HCT116 (cell line): ENCODE measurements at regions of chr3 and their contacts with region 1.

Region 1: GRCh38 chr3:151290673-151291072 is 12.3 kb upstream of the P2RY14 start:
- DNase-seq: peak; percentile 29
- ATAC-seq: no peak
- H3K4me3 ChIP-seq: no peak overlapping the region
- H3K27ac ChIP-seq: no peak overlapping the region
- H3K4me1 ChIP-seq: no peaks in the 10 kb centered on the region
- H3K27me3 ChIP-seq: no peaks in the 10 kb centered on the region
- CTCF ChIP-seq: peak; percentile 28 to 76 (median 68); a peak in 5 of 6 replicates
- POLR2A ChIP-seq: no peak
- RAD21 ChIP-seq: peak; percentile 90

Region 2: GRCh38 chr3:151305752-151306151 is 15.1 kb after region 1 on chr3:
- CTCF ChIA-PET with region 1: no interaction called
- POLR2A ChIA-PET with region 1: no interaction called
- RAD21 ChIA-PET with region 1: no interaction called
- intact Hi-C with region 1: no loop called
- DNase-seq: no peak
- ATAC-seq: peak; percentile 23; the same call in 1 of the 2 replicates
- H3K4me3 ChIP-seq: peak overlapping the region in 1 of 2 experiments; percentile 39; a peak in 2 of 4 replicates
- H3K27ac ChIP-seq: peak overlapping the region; percentile 75
- H3K4me1 ChIP-seq: peaks cover 26 to 62% of the 10 kb centered on the region in 2 experiments
- H3K27me3 ChIP-seq: no peaks in the 10 kb centered on the region
- CTCF ChIP-seq: no peak
- POLR2A ChIP-seq: no peak
- RAD21 ChIP-seq: no peak

Region 3: DNA sequence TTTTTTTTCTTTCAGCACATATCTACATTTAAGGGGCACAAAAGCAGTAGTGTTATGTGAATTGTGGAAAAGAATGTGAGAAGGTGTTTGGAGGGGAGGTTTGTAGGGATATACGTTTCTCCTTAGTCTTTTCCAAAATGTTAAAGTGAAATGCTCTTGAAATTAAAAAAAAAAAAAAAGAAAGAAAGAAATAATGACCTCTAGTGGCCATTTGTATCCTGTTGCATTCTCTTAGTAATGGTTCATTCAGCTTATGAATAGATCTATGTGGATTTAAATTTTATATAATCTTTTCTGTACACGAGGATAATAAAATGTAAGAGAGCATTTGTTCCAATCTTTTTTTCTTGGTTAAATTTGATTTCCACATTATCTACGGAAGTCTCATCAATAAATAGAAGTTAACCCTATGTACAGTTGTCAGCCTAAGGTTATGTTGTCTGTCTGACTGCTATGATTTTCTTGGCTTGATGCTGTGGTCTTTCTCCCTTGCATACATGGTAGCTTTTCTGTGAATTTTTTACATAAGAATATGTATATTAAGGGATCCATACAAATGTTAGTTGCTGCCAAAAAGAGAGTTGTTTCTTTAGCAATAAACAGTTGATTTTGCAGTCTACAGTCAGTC is 37.0 kb after region 1 on chr3:
- CTCF ChIA-PET with region 1: interaction called, 5 read pairs
- POLR2A ChIA-PET with region 1: interaction called, 3 read pairs
- RAD21 ChIA-PET with region 1: no interaction called
- intact Hi-C with region 1: loop called (anchors 1 kb)
- DNase-seq: no peak
- ATAC-seq: peak; percentile 60
- H3K4me3 ChIP-seq: no peak overlapping the region
- H3K27ac ChIP-seq: no peak overlapping the region
- H3K4me1 ChIP-seq: peaks cover 15 to 22% of the 10 kb centered on the region in 2 experiments
- H3K27me3 ChIP-seq: no peaks in the 10 kb centered on the region
- CTCF ChIP-seq: peak; percentile 43 to 73 (median 63); a peak in 4 of 6 replicates
- POLR2A ChIP-seq: no peak
- RAD21 ChIP-seq: peak; percentile 66

Region 4: DNA sequence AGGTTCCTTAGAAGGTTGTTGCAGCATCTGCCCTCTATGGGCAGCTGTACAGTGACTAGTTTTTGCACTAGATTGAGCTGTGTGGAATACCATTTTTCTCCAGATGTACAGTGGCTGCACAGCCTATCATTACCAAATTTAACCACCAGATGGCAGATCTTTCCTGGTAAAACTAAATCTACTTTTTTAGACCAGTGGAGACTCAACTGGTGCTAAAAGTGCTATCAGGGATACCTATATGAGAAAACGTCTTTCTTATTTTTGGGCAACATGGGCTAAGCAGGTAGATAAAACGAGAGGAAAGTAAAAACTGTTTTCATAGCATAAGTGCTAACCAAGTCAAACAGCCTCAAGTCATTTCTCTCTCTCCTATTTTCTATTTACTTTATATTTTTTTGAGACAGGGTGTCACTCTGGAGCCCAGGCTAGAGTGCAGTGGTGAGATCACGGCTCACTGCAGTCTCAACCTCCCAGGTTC is 149.0 kb after region 1 on chr3:
- CTCF ChIA-PET with region 1: interaction called, 3 read pairs
- POLR2A ChIA-PET with region 1: no interaction called
- RAD21 ChIA-PET with region 1: no interaction called
- intact Hi-C with region 1: loop called (anchors 5 kb)
- DNase-seq: peak; percentile 53
- ATAC-seq: peak; percentile 94
- H3K4me3 ChIP-seq: no peak overlapping the region
- H3K27ac ChIP-seq: no peak overlapping the region
- H3K4me1 ChIP-seq: no peaks in the 10 kb centered on the region
- H3K27me3 ChIP-seq: no peaks in the 10 kb centered on the region
- CTCF ChIP-seq: peak; percentile 77 to 90 (median 88)
- POLR2A ChIP-seq: no peak
- RAD21 ChIP-seq: peak; percentile 88

Region 5: GRCh38 chr3:151660885-151661284 is 370.2 kb after region 1 on chr3:
- CTCF ChIA-PET with region 1: no interaction called
- POLR2A ChIA-PET with region 1: no interaction called
- RAD21 ChIA-PET with region 1: no interaction called
- intact Hi-C with region 1: loop called (anchors 5 kb)
- DNase-seq: no peak
- ATAC-seq: no peak
- H3K4me3 ChIP-seq: no peak overlapping the region
- H3K27ac ChIP-seq: no peak overlapping the region
- H3K4me1 ChIP-seq: no peaks in the 10 kb centered on the region
- H3K27me3 ChIP-seq: no peaks in the 10 kb centered on the region
- CTCF ChIP-seq: peak in 1 of 3 experiments; percentile 36; a peak in 3 of 6 replicates
- POLR2A ChIP-seq: no peak
- RAD21 ChIP-seq: peak; percentile 39